ENCODE measurements at regions of chr1 and their contacts with region 1.

Region 1: GRCh38 chr1:77950873-77951272 is 28.0 kb downstream of the FUBP1 start:
- DNase-seq: no peak
- ATAC-seq: no peak
- H3K4me3 ChIP-seq: no peak overlapping the region
- H3K4me3 Mint-ChIP-seq: no peak overlapping the region
- H3K27ac ChIP-seq: no peak overlapping the region
- H3K27ac Mint-ChIP-seq: peak overlapping the region; percentile 18
- H3K4me1 ChIP-seq: no peaks in the 10 kb centered on the region
- H3K4me1 Mint-ChIP-seq: peaks cover 30% of the 10 kb centered on the region
- H3K27me3 ChIP-seq: no peaks in the 10 kb centered on the region
- H3K27me3 Mint-ChIP-seq: no peaks in the 10 kb centered on the region
- CTCF ChIP-seq: no peak

Region 2: GRCh38 chr1:77565321-77565720 is 385.6 kb before region 1 on chr1:
- CTCF ChIA-PET with region 1: no interaction called
- POLR2A ChIA-PET with region 1: no interaction called
- intact Hi-C with region 1: loop called in 1 of 2 experiments (anchors 10 kb)
- DNase-seq: no peak
- ATAC-seq: no peak
- H3K4me3 ChIP-seq: no peak overlapping the region
- H3K4me3 Mint-ChIP-seq: no peak overlapping the region
- H3K27ac ChIP-seq: no peak overlapping the region
- H3K27ac Mint-ChIP-seq: peak overlapping the region; percentile 27
- H3K4me1 ChIP-seq: no peaks in the 10 kb centered on the region
- H3K4me1 Mint-ChIP-seq: no peaks in the 10 kb centered on the region
- H3K27me3 ChIP-seq: no peaks in the 10 kb centered on the region
- H3K27me3 Mint-ChIP-seq: no peaks in the 10 kb centered on the region
- CTCF ChIP-seq: no peak

Region 3: DNA sequence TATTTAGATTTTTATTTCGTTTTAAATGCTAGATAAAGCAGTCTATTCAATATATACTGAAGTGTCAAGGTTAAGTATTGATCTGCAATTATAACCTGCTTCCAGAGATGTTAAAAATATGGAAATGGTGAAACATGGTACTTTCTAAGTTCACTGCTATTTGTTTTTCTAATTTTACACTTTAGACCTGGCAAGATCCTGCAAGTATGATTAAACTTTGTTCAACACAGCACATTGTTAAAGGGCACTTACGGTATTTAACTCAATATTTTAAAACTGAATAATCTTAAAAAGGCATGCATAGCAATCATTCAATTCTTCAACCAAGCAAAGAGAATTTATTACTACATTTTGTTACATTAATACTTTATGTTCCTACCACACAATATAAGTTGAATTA is 232.7 kb before region 1 on chr1:
- CTCF ChIA-PET with region 1: no interaction called
- POLR2A ChIA-PET with region 1: no interaction called
- intact Hi-C with region 1: loop called in 1 of 2 experiments (anchors 5 kb)
- DNase-seq: no peak
- ATAC-seq: no peak
- H3K4me3 ChIP-seq: no peak overlapping the region
- H3K4me3 Mint-ChIP-seq: no peak overlapping the region
- H3K27ac ChIP-seq: no peak overlapping the region
- H3K27ac Mint-ChIP-seq: no peak overlapping the region
- H3K4me1 ChIP-seq: no peaks in the 10 kb centered on the region
- H3K4me1 Mint-ChIP-seq: no peaks in the 10 kb centered on the region
- H3K27me3 ChIP-seq: no peaks in the 10 kb centered on the region
- H3K27me3 Mint-ChIP-seq: no peaks in the 10 kb centered on the region
- CTCF ChIP-seq: no peak

Region 4: DNA sequence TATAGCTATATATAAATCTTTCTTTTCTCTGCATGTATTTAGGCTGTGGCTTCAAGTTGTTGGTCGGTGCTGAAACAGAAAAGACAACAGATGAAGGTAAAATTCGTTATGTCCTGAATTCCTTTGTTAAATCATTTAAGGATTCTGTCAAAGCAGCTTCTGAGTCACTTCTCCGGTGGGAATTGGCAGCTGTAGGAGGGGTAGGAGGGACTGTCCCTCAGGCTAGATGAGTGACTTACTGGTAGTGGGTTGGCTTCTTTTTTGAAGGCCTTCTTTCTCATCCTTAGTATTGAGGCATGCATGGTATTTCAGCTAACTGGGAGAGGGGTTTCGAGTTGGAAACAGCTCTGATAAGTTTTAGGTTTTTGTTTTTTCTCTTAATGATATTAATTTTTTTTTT is 84.6 kb before region 1 on chr1:
- CTCF ChIA-PET with region 1: no interaction called
- POLR2A ChIA-PET with region 1: no interaction called
- intact Hi-C with region 1: loop called in 1 of 2 experiments (anchors 10 kb)
- DNase-seq: no peak
- ATAC-seq: no peak
- H3K4me3 ChIP-seq: no peak overlapping the region
- H3K4me3 Mint-ChIP-seq: no peak overlapping the region
- H3K27ac ChIP-seq: no peak overlapping the region
- H3K27ac Mint-ChIP-seq: no peak overlapping the region
- H3K4me1 ChIP-seq: no peaks in the 10 kb centered on the region
- H3K4me1 Mint-ChIP-seq: no peaks in the 10 kb centered on the region
- H3K27me3 ChIP-seq: no peaks in the 10 kb centered on the region
- H3K27me3 Mint-ChIP-seq: no peaks in the 10 kb centered on the region
- CTCF ChIP-seq: no peak

Region 5: GRCh38 chr1:77900687-77901293 is 50.1 kb before region 1 on chr1:
- CTCF ChIA-PET with region 1: no interaction called
- POLR2A ChIA-PET with region 1: no interaction called
- intact Hi-C with region 1: no loop called
- DNase-seq: peak in 3 of 14 experiments; percentile 12 to 28 (median 23)
- ATAC-seq: no peak
- H3K4me3 ChIP-seq: no peak overlapping the region
- H3K4me3 Mint-ChIP-seq: no peak overlapping the region
- H3K27ac ChIP-seq: no peak overlapping the region
- H3K27ac Mint-ChIP-seq: no peak overlapping the region
- H3K4me1 ChIP-seq: no peaks in the 10 kb centered on the region
- H3K4me1 Mint-ChIP-seq: no peaks in the 10 kb centered on the region
- H3K27me3 ChIP-seq: no peaks in the 10 kb centered on the region
- H3K27me3 Mint-ChIP-seq: no peaks in the 10 kb centered on the region
- CTCF ChIP-seq: peak; percentile 41

Region 6: GRCh38 chr1:78377356-78377928 is 426.6 kb after region 1 on chr1:
- CTCF ChIA-PET with region 1: no interaction called
- POLR2A ChIA-PET with region 1: no interaction called
- intact Hi-C with region 1: no loop called
- DNase-seq: no peak
- ATAC-seq: no peak
- H3K4me3 ChIP-seq: no peak overlapping the region
- H3K4me3 Mint-ChIP-seq: no peak overlapping the region
- H3K27ac ChIP-seq: no peak overlapping the region
- H3K27ac Mint-ChIP-seq: no peak overlapping the region
- H3K4me1 ChIP-seq: no peaks in the 10 kb centered on the region
- H3K4me1 Mint-ChIP-seq: no peaks in the 10 kb centered on the region
- H3K27me3 ChIP-seq: no peaks in the 10 kb centered on the region
- H3K27me3 Mint-ChIP-seq: no peaks in the 10 kb centered on the region
- CTCF ChIP-seq: no peak

Measured in CD4-positive, alpha-beta T cell (primary cell).